ENCODE measurements at regions of chr2 and their contacts with region 1.

Region 1: GRCh38 chr2:172095146-172095904 is 7.4 kb downstream of the DLX2 start:
- DNase-seq: peak; percentile 52 to 93 (median 75)
- ATAC-seq: peak; percentile 89
- H3K4me3 ChIP-seq: peak overlapping the region; percentile 40 to 56
- H3K4me3 Mint-ChIP-seq: peak overlapping the region; percentile 86
- H3K27ac ChIP-seq: no peak overlapping the region
- H3K27ac Mint-ChIP-seq: peak overlapping the region; percentile 39
- H3K4me1 ChIP-seq: peaks cover 56% of the 10 kb centered on the region
- H3K4me1 Mint-ChIP-seq: peaks cover 32% of the 10 kb centered on the region
- H3K27me3 ChIP-seq: peaks cover 92 to 95% of the 10 kb centered on the region in 2 experiments
- H3K27me3 Mint-ChIP-seq: peaks cover 68% of the 10 kb centered on the region
- CTCF ChIP-seq: no peak

Region 2: GRCh38 chr2:172021955-172022354 is 73.4 kb before region 1 on chr2:
- CTCF ChIA-PET with region 1: no interaction called
- POLR2A ChIA-PET with region 1: no interaction called
- intact Hi-C with region 1: no loop called
- DNase-seq: no peak
- ATAC-seq: no peak
- H3K4me3 ChIP-seq: no peak overlapping the region
- H3K4me3 Mint-ChIP-seq: no peak overlapping the region
- H3K27ac ChIP-seq: no peak overlapping the region
- H3K27ac Mint-ChIP-seq: no peak overlapping the region
- H3K4me1 ChIP-seq: no peaks in the 10 kb centered on the region
- H3K4me1 Mint-ChIP-seq: no peaks in the 10 kb centered on the region
- H3K27me3 ChIP-seq: no peaks in the 10 kb centered on the region
- H3K27me3 Mint-ChIP-seq: no peaks in the 10 kb centered on the region
- CTCF ChIP-seq: no peak

Region 3: GRCh38 chr2:172084734-172085459 is 10.4 kb before region 1 on chr2:
- CTCF ChIA-PET with region 1: interaction called, 16 read pairs
- POLR2A ChIA-PET with region 1: interaction called, 6 read pairs
- intact Hi-C with region 1: loop called in 1 of 2 experiments (anchors 1 kb)
- DNase-seq: peak in 3 of 9 experiments; percentile 56 to 73 (median 59)
- ATAC-seq: peak; percentile 70
- H3K4me3 ChIP-seq: peak overlapping the region; percentile 13 to 33
- H3K4me3 Mint-ChIP-seq: peak overlapping the region; percentile 74
- H3K27ac ChIP-seq: no peak overlapping the region
- H3K27ac Mint-ChIP-seq: peak overlapping the region; percentile 52
- H3K4me1 ChIP-seq: peaks cover 48% of the 10 kb centered on the region
- H3K4me1 Mint-ChIP-seq: peaks cover 45% of the 10 kb centered on the region
- H3K27me3 ChIP-seq: peaks cover 95 to 97% of the 10 kb centered on the region in 2 experiments
- H3K27me3 Mint-ChIP-seq: peaks cover 91% of the 10 kb centered on the region
- CTCF ChIP-seq: no peak

Measured in CD8-positive, alpha-beta T cell (primary cell).